GM12878 (cell line): ENCODE measurements at regions of chr17 and their contacts with region 1.

Region 1: GRCh38 chr17:29589524-29590410 is at the start of gene GIT1:
- DNase-seq: no peak
- ATAC-seq: peak; percentile 74
- H3K4me3 ChIP-seq: peak within 1 kb of the TSS; percentile 94
- H3K27ac ChIP-seq: peak within 1 kb of the TSS; percentile 72
- H3K4me1 ChIP-seq: peaks cover 52% of the 10 kb centered on the region
- H3K27me3 ChIP-seq: no peaks in the 10 kb centered on the region; a peak in 1 of 4 replicates
- CTCF ChIP-seq: no peak
- EP300 ChIP-seq: no peak
- POLR2A ChIP-seq: peak; percentile 63; the same call in 1 of the 2 replicates
- RAD21 ChIP-seq: no peak
- polyA plus RNA-seq, gene GIT1: 0.24 to 0.58 TPM

Region 2: GRCh38 chr17:29568331-29569244 is 21.2 kb before region 1 on chr17 and contains the start of gene TP53I13:
- CTCF ChIA-PET with region 1: interaction called, 15 read pairs
- POLR2A ChIA-PET with region 1: interaction called, 4 read pairs
- RAD21 ChIA-PET with region 1: interaction called, 11 read pairs
- SMC1A ChIA-PET with region 1: interaction called, 5 read pairs
- in situ Hi-C with region 1: no loop called
- intact Hi-C with region 1: no loop called
- DNase-seq: no peak
- ATAC-seq: peak; percentile 64
- H3K4me3 ChIP-seq: peak within 1 kb of the TSS; percentile 96
- H3K27ac ChIP-seq: peak within 1 kb of the TSS; percentile 81
- H3K4me1 ChIP-seq: peaks cover 6% of the 10 kb centered on the region; the same call in 1 of the 2 replicates
- H3K27me3 ChIP-seq: no peaks in the 10 kb centered on the region
- CTCF ChIP-seq: no peak
- EP300 ChIP-seq: no peak
- POLR2A ChIP-seq: peak; percentile 78
- RAD21 ChIP-seq: no peak
- polyA plus RNA-seq, gene TP53I13: 0.31 TPM in 1 of 2 experiments, not detected in the other